PC-3 (cell line): ENCODE measurements at regions of chr15 and their contacts with region 1.

Region 1: DNA sequence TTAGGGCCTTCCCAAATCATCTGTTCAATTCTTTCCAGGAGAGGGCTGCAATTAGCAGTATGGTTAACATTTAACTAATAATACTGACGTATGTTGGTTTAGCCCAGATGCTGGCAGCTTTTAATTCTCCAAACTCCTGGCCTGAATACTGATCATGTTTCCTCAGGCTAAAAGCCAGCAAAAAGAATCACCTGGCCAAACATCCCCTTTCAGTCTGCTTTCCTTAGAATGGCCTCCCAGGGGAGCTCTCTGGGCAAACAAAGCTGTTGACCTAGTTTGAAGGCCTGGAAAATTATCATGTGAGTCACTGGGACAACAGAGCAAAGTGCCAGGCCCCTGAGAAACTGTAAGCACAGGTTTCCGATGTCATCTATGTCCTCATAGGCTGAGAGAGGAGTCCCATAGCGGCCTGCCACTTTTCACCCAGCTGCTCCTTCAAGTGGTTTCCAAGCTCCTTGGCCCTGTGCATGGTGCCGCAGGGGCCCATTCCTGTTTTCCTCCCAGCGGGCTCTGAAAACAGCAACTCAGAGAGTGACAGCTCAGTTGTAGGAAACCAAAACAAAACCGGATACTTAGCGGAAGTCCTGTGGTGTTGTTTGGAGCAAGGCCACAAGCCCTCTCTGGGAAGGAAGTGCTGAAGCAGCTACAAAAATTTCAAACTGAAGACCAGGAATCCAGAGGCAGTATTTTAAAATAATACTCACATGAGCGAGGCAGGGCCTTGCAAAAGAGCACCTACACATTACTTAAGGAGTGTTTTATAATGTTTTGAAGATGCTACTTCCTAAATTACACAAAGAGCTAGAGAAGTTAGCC is 36.5 kb upstream of the RAB11A start:
- DNase-seq: peak; percentile 97
- ATAC-seq: peak; percentile 98
- H3K4me3 ChIP-seq: peak overlapping the region; percentile 52
- H3K27ac ChIP-seq: peak overlapping the region; percentile 67
- H3K4me1 ChIP-seq: peaks cover 18% of the 10 kb centered on the region
- H3K27me3 ChIP-seq: no peaks in the 10 kb centered on the region
- CTCF ChIP-seq: peak; percentile 35; the same call in 1 of the 2 replicates

Region 2: DNA sequence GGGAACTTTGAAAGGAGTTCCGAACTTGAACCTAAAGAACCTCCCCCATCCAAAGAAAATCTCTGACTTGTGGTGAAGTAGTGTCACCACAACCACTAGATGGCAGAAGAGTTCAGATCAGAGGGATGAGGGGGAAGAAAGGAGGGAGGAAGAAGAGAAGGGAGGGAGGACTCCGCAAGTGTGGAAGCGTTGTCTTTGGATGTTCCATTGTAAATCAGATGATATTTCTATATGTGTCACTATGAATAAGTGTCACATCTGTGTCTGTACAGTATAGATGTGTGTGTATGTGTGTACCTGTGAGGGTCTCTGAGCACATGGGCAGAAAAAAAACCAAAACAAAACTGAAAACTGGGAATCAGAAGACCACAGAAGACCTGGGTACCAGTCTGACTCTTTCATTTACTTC is 194.1 kb before region 1 on chr15:
- CTCF ChIA-PET with region 1: interaction called, 4 read pairs
- POLR2A ChIA-PET with region 1: no interaction called
- intact Hi-C with region 1: loop called (anchors 1 kb)
- DNase-seq: peak; percentile 81
- ATAC-seq: peak; percentile 77
- H3K4me3 ChIP-seq: no peak overlapping the region
- H3K27ac ChIP-seq: no peak overlapping the region
- H3K4me1 ChIP-seq: peaks cover 8% of the 10 kb centered on the region; the same call in 1 of the 2 replicates
- H3K27me3 ChIP-seq: no peaks in the 10 kb centered on the region
- CTCF ChIP-seq: peak; percentile 82

Region 3: GRCh38 chr15:65655026-65655425 is 177.7 kb before region 1 on chr15:
- CTCF ChIA-PET with region 1: no interaction called
- POLR2A ChIA-PET with region 1: no interaction called
- intact Hi-C with region 1: loop called (anchors 5 kb)
- DNase-seq: peak; percentile 38
- ATAC-seq: peak; percentile 55
- H3K4me3 ChIP-seq: no peak overlapping the region
- H3K27ac ChIP-seq: no peak overlapping the region
- H3K4me1 ChIP-seq: peaks cover 43% of the 10 kb centered on the region
- H3K27me3 ChIP-seq: no peaks in the 10 kb centered on the region
- CTCF ChIP-seq: no peak

Region 4: DNA sequence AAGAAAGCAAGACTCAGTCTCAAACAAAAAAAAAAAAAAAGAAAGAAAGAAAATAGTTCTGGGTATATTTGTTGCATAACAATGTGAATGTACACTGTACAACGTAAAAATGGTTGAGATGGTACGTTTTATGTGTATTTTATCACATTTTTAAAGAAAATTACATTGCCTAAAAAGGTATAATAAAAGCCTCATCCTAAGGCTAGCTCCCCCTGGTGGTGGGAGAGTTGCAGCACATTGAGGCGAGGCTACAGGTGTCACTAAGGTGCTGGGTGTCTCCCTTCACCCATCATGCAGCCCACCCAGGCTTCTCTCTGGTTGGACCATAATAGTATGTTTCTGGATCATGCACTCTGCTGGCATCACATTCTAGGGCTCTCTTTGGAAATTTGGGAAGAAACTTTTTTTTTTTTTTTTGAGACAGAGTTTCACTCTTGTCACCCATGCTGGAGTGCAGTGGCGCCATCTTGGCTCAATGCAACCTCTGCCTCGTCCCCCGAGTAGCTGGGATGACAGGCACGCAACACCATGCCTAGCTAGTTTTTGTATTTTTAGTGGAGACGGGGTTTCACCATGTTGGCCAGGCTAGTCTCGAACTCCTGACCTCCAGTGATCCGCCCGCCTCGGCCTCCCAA is 24.2 kb after region 1 on chr15:
- CTCF ChIA-PET with region 1: interaction called, 3 read pairs
- POLR2A ChIA-PET with region 1: interaction called, 4 read pairs
- intact Hi-C with region 1: loop called (anchors 1 kb)
- DNase-seq: peak; percentile 71
- ATAC-seq: peak; percentile 35; the same call in 1 of the 2 replicates
- H3K4me3 ChIP-seq: no peak overlapping the region
- H3K27ac ChIP-seq: no peak overlapping the region
- H3K4me1 ChIP-seq: peaks cover 9% of the 10 kb centered on the region; the same call in 1 of the 2 replicates
- H3K27me3 ChIP-seq: no peaks in the 10 kb centered on the region
- CTCF ChIP-seq: peak; percentile 81

Region 5: GRCh38 chr15:65869127-65869953 is 36.6 kb after region 1 on chr15 and contains the start of gene RAB11A:
- CTCF ChIA-PET with region 1: interaction called, 7 read pairs
- POLR2A ChIA-PET with region 1: interaction called, 6 read pairs
- intact Hi-C with region 1: loop called (anchors 1 kb)
- DNase-seq: peak; percentile 90
- ATAC-seq: peak; percentile 90
- H3K4me3 ChIP-seq: peak within 1 kb of the TSS; percentile 89
- H3K27ac ChIP-seq: peak within 1 kb of the TSS; percentile 60
- H3K4me1 ChIP-seq: peaks cover 16% of the 10 kb centered on the region
- H3K27me3 ChIP-seq: no peaks in the 10 kb centered on the region
- CTCF ChIP-seq: no peak; the same call in 1 of the 2 replicates
- total RNA-seq, gene RAB11A: 123 and 171 TPM in 2 replicates